ENCODE measurements at regions of chr20 and their contacts with region 1.

Region 1: DNA sequence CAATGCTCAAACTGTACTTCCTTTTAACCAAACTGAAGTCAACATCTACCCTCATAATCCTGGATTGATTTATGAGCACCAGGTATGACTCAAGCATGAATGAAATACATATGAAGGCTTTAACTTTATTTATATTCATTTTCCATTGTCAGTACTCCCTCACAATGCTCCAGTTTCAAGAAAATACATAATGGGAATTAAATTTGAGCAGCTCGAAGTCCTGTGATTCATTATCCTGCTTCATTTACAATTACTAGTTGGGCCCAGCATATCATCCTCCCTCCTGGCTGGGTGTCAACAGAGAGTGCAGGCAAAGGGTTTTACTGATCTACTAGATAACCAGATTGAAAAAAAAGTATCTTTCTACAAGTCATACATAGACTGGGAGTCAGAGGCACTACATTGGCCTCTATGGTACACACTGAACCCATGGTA is 10.1 kb downstream of the SAMHD1 start:
- DNase-seq: no peak
- ATAC-seq: peak; percentile 31
- H3K4me3 ChIP-seq: peak overlapping the region; percentile 22
- H3K4me3 Mint-ChIP-seq: peak overlapping the region; percentile 46 to 99 (median 70)
- H3K27ac ChIP-seq: peak overlapping the region; percentile 91
- H3K27ac Mint-ChIP-seq: peak overlapping the region; percentile 29 to 99 (median 91)
- H3K4me1 ChIP-seq: peaks cover 72 to 83% of the 10 kb centered on the region in 2 donors
- H3K4me1 Mint-ChIP-seq: peaks cover 38 to 85% (median 77%) of the 10 kb centered on the region in 7 donors
- H3K27me3 ChIP-seq: no peaks in the 10 kb centered on the region
- H3K27me3 Mint-ChIP-seq: no peaks in the 10 kb centered on the region

Region 2: GRCh38 chr20:36399147-36399968 is 542.1 kb before region 1 on chr20:
- CTCF ChIA-PET with region 1: no interaction called
- POLR2A ChIA-PET with region 1: no interaction called
- intact Hi-C with region 1: no loop called
- DNase-seq: peak in 6 of 9 donors; percentile 4 to 28 (median 11)
- ATAC-seq: peak; percentile 63
- H3K4me3 ChIP-seq: no peak overlapping the region
- H3K4me3 Mint-ChIP-seq: no peak overlapping the region
- H3K27ac ChIP-seq: no peak overlapping the region
- H3K27ac Mint-ChIP-seq: no peak overlapping the region
- H3K4me1 ChIP-seq: no peaks in the 10 kb centered on the region
- H3K4me1 Mint-ChIP-seq: peaks cover 0 to 9% (median 0%) of the 10 kb centered on the region in 7 donors
- H3K27me3 ChIP-seq: peaks cover 0 to 3% of the 10 kb centered on the region in 2 donors
- H3K27me3 Mint-ChIP-seq: peaks cover 25 to 41% (median 31%) of the 10 kb centered on the region in 5 donors

Region 3: GRCh38 chr20:36541227-36541763 is 400.1 kb before region 1 on chr20 and contains the start of gene MYL9:
- CTCF ChIA-PET with region 1: no interaction called
- POLR2A ChIA-PET with region 1: no interaction called
- intact Hi-C with region 1: no loop called
- DNase-seq: peak in 1 of 9 donors; percentile 27
- ATAC-seq: peak; percentile 81
- H3K4me3 ChIP-seq: no peak within 1 kb of the TSS
- H3K4me3 Mint-ChIP-seq: peak within 1 kb of the TSS in 2 of 10 donors; percentile 30 to 36
- H3K27ac ChIP-seq: no peak within 1 kb of the TSS
- H3K27ac Mint-ChIP-seq: peak within 1 kb of the TSS in 1 of 9 donors; percentile 9
- H3K4me1 ChIP-seq: no peaks in the 10 kb centered on the region
- H3K4me1 Mint-ChIP-seq: peaks cover 0 to 3% (median 0%) of the 10 kb centered on the region in 7 donors
- H3K27me3 ChIP-seq: no peaks in the 10 kb centered on the region
- H3K27me3 Mint-ChIP-seq: peaks cover 0 to 9% (median 0%) of the 10 kb centered on the region in 5 donors
- total RNA-seq, gene MYL9: 0.29 to 2.4 (median 0.29) TPM in 3 of 5 experiments, not detected in the others

Region 4: GRCh38 chr20:36886859-36887751 is 54.3 kb before region 1 on chr20:
- CTCF ChIA-PET with region 1: no interaction called
- POLR2A ChIA-PET with region 1: no interaction called
- intact Hi-C with region 1: no loop called
- DNase-seq: peak; percentile 59 to 84 (median 75)
- ATAC-seq: peak; percentile 94
- H3K4me3 ChIP-seq: no peak overlapping the region
- H3K4me3 Mint-ChIP-seq: peak overlapping the region in 7 of 10 donors; percentile 10 to 62 (median 36)
- H3K27ac ChIP-seq: peak overlapping the region; percentile 33
- H3K27ac Mint-ChIP-seq: peak overlapping the region; percentile 2 to 89 (median 73)
- H3K4me1 ChIP-seq: peaks cover 5 to 7% of the 10 kb centered on the region in 2 donors
- H3K4me1 Mint-ChIP-seq: peaks cover 4 to 22% (median 16%) of the 10 kb centered on the region in 7 donors
- H3K27me3 ChIP-seq: no peaks in the 10 kb centered on the region
- H3K27me3 Mint-ChIP-seq: no peaks in the 10 kb centered on the region

Region 5: DNA sequence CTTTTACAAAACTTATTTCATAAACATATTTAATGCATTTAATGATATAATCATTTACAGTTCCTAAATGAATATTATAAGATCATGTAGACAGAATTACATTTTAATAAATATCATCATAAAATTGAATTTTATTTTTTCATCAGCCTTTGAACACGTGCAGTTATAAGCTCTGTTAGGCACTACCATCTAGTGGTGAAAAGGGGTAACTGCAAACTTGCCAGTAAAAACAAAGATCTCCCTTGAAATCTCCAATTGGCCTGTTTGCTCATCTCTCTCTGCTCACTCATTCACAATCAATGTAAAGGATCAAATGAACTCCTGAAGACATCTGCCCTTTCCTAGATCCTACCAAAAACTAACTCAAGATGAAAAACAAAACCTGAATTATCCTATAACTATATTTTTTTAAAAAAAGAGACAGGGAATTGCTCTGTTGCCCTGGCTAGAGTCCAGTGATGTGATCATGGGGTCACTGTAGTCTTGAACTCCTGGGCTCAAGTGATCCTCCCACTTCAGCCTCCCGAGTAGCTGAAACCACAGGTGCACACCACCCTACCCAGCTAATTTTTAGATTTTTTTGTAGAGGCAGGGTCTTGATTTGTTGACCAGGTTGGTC is 21.6 kb before region 1 on chr20:
- CTCF ChIA-PET with region 1: interaction called, 5 read pairs
- POLR2A ChIA-PET with region 1: interaction called, 28 read pairs
- intact Hi-C with region 1: no loop called
- DNase-seq: peak in 7 of 9 donors; percentile 43 to 73 (median 67)
- ATAC-seq: peak; percentile 90
- H3K4me3 ChIP-seq: no peak overlapping the region
- H3K4me3 Mint-ChIP-seq: peak overlapping the region in 5 of 10 donors; percentile 2 to 34 (median 26)
- H3K27ac ChIP-seq: peak overlapping the region; percentile 47
- H3K27ac Mint-ChIP-seq: peak overlapping the region; percentile 56 to 98 (median 75)
- H3K4me1 ChIP-seq: peaks cover 0 to 30% of the 10 kb centered on the region in 2 donors
- H3K4me1 Mint-ChIP-seq: peaks cover 15 to 44% (median 24%) of the 10 kb centered on the region in 7 donors
- H3K27me3 ChIP-seq: no peaks in the 10 kb centered on the region
- H3K27me3 Mint-ChIP-seq: no peaks in the 10 kb centered on the region

Region 6: DNA sequence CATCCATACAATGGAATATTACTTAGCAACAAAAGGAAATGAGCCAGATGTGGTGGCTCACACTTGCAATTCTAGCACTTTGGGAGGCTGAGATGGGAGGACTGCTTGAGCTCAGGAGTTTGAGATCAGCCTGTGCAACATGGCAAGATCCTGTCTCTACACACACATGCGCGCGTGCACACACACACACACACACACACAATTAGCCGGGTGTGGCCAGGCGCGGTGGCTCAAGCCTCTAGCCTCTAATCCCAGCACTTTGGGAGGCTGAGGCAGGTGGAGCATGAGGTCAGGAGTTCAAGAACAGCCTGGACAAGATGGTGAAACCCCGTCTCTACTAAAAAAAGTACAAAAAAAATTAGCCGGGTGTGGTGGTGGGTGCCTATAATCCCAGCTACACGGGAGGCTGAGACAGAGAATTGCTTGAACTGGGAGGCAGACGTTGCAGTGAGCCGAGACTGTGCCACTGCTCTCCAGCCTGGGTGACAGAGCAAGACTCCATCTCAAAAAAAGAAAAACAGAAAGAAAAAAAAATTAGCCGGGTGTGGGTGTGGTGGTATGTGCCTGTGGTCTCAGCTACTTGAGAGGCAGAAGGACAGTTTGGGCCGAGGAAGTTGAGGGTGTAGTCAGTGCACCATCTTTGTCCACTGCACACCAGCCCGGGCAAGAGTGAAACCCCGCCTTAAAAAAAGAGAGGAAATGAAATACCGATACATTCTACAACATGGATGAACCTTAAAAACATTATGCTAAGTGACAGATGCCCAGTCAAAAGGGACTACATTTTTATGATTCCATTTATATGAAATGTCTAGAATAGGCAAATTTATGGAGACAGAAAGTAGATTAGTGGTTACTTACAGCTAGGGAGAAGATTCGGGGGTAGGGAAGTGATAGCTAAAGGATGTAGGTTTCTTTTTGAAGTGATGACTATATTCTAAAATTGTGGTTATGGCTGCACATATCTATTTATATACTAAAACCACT is 101.9 kb after region 1 on chr20:
- CTCF ChIA-PET with region 1: no interaction called
- POLR2A ChIA-PET with region 1: no interaction called
- intact Hi-C with region 1: loop called in 1 of 2 experiments (anchors 5 kb)
- DNase-seq: peak in 8 of 9 donors; percentile 13 to 48 (median 38)
- ATAC-seq: peak; percentile 76
- H3K4me3 ChIP-seq: peak overlapping the region; percentile 67
- H3K4me3 Mint-ChIP-seq: peak overlapping the region; percentile 81 to 97 (median 87)
- H3K27ac ChIP-seq: peak overlapping the region; percentile 59
- H3K27ac Mint-ChIP-seq: peak overlapping the region; percentile 78 to 99 (median 93)
- H3K4me1 ChIP-seq: peaks cover 14 to 17% of the 10 kb centered on the region in 2 donors
- H3K4me1 Mint-ChIP-seq: peaks cover 6 to 38% (median 32%) of the 10 kb centered on the region in 7 donors
- H3K27me3 ChIP-seq: no peaks in the 10 kb centered on the region
- H3K27me3 Mint-ChIP-seq: no peaks in the 10 kb centered on the region

Region 7: GRCh38 chr20:37071481-37071911 is 130.1 kb after region 1 on chr20:
- CTCF ChIA-PET with region 1: no interaction called
- POLR2A ChIA-PET with region 1: no interaction called
- intact Hi-C with region 1: loop called in 1 of 2 experiments (anchors 10 kb)
- DNase-seq: peak in 6 of 9 donors; percentile 13 to 31 (median 21)
- ATAC-seq: peak; percentile 48
- H3K4me3 ChIP-seq: no peak overlapping the region
- H3K4me3 Mint-ChIP-seq: peak overlapping the region; percentile 39 to 69 (median 57)
- H3K27ac ChIP-seq: peak overlapping the region; percentile 49
- H3K27ac Mint-ChIP-seq: peak overlapping the region; percentile 80 to 93 (median 87)
- H3K4me1 ChIP-seq: peaks cover 14 to 19% of the 10 kb centered on the region in 2 donors
- H3K4me1 Mint-ChIP-seq: peaks cover 14 to 33% (median 29%) of the 10 kb centered on the region in 7 donors
- H3K27me3 ChIP-seq: no peaks in the 10 kb centered on the region
- H3K27me3 Mint-ChIP-seq: no peaks in the 10 kb centered on the region